Mucosa of descending colon (tissue), 3 donors: ENCODE measurements at regions of chr6 and their contacts with region 1.

Region 1: GRCh38 chr6:139349464-139350020 is 24.9 kb downstream of the CITED2 start:
- DNase-seq: no peak
- ATAC-seq: no peak
- H3K4me3 ChIP-seq: no peak overlapping the region
- H3K4me1 ChIP-seq: no peaks in the 10 kb centered on the region
- CTCF ChIP-seq: no peak

Region 2: DNA sequence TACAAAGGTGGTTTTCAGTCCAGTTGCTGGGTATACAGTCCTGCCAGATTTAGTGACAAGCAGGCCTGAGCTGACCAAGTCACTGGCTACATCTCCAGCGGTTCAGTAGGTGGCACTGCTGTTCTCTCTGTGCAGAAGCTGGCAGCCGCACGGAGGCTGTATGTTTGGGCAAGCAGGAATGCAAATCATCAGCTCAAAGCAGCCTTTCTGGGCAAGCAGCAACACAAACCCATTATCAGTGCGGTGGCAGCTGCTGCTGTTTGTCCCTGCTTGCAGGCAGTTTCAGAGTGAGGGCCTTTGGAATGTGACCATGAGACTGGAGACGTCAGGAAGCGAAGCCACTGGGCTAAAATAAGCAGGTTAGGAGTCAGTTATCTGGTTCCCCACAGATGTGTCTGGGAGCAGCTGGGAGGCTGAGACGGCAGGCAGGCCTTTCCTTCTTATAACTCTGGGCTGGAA is 130.2 kb before region 1 on chr6:
- intact Hi-C with region 1: loop called in 1 of 2 experiments (anchors 5 kb)
- DNase-seq: peak; percentile 76 to 84 (median 82)
- ATAC-seq: peak; percentile 100
- H3K4me3 ChIP-seq: no peak overlapping the region
- H3K4me1 ChIP-seq: no peaks in the 10 kb centered on the region
- CTCF ChIP-seq: peak; percentile 70